GM23248 (cell line): ENCODE measurements at regions of chr7 and their contacts with region 1.

Region 1: DNA sequence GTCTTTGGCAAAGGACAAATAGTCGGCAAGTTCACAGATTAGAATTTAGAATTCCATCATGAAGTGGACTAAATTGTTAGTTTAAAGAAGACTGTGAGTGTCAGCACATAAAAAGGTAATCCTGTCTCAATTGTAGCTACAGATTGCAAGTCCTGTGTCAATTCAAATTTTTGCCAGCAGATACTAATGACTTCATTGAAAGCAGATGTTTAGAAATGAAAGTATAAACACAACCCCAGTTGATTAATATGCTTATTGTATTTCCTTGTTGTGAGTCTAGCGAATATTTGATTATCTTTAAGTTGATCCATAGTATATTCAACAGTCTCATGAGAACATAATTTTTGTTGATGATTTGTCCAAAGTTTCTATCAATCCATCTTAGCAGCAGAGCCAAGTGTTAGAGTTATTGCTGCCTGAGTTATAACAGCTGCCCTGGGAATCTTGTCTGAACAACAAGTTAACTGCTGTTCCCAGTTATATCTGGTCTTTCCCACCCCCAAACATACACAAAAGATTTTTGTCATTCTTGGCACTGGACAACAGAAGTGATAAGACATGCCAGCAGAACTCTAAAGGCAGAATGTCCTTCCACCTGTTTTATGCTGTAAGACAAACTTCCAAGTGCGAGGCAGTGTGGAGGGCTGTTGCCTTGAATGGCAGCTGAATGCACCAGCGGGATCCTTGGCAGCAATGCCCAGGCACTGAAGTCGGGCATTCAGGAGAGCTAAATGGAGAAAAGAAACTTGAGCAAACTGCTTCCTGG is 21.3 kb upstream of the HERPUD2 start:
- DNase-seq: peak; percentile 28
- H3K4me3 ChIP-seq: peak overlapping the region; percentile 25
- H3K27ac ChIP-seq: no peak overlapping the region
- H3K4me1 ChIP-seq: peaks cover 9% of the 10 kb centered on the region
- H3K27me3 ChIP-seq: no peaks in the 10 kb centered on the region

Region 2: GRCh38 chr7:35906191-35906908 is 190.1 kb after region 1 on chr7:
- in situ Hi-C with region 1: loop called (anchors 10 kb)
- DNase-seq: peak; percentile 67
- H3K4me3 ChIP-seq: no peak overlapping the region
- H3K27ac ChIP-seq: no peak overlapping the region
- H3K4me1 ChIP-seq: 0 out of 2 replicates have a peak, but pooled peaks cover 10% of the 10 kb centered on the region
- H3K27me3 ChIP-seq: no peaks in the 10 kb centered on the region

Region 3: GRCh38 chr7:36303202-36304098 is 587.2 kb after region 1 on chr7:
- in situ Hi-C with region 1: loop called (anchors 25 kb)
- DNase-seq: peak; percentile 100
- H3K4me3 ChIP-seq: no peak overlapping the region
- H3K27ac ChIP-seq: peak overlapping the region; percentile 74
- H3K4me1 ChIP-seq: peaks cover 23% of the 10 kb centered on the region
- H3K27me3 ChIP-seq: no peaks in the 10 kb centered on the region